Brain microvascular endothelial cell (primary cell): ENCODE measurements at regions of chr7 and their contacts with region 1.

Region 1: GRCh38 chr7:137592232-137592896 is 248.8 kb upstream of the PTN start:
- DNase-seq: peak; percentile 81
- H3K4me3 ChIP-seq: no peak overlapping the region
- H3K27ac ChIP-seq: peak overlapping the region; percentile 64
- H3K27me3 ChIP-seq: no peaks in the 10 kb centered on the region
- CTCF ChIP-seq: peak; percentile 90

Region 2: GRCh38 chr7:137169282-137169698 is 423.1 kb before region 1 on chr7:
- in situ Hi-C with region 1: loop called (anchors 25 kb)
- DNase-seq: peak; percentile 74
- H3K4me3 ChIP-seq: no peak overlapping the region
- H3K27ac ChIP-seq: no peak overlapping the region
- H3K27me3 ChIP-seq: no peaks in the 10 kb centered on the region
- CTCF ChIP-seq: peak; percentile 90